Activated T-helper 2 cell treated with anti-CD3 and anti-CD28 coated beads, Interferon-gamma antibody, Interleukin-2, Interleukin-4, amounts not matched to agents 10 μg/mL and 5 μg/mL and 100 μg/mL, durations not matched to agents 14 hours and 24 hours and 36 hours (primary cell): ENCODE measurements at regions of chr18 and their contacts with region 1.

Region 1: GRCh38 chr18:6004683-6005082 is 109.4 kb upstream of the TMEM200C start:
- DNase-seq: peak; percentile 43
- H3K4me3 Mint-ChIP-seq: no peak overlapping the region
- H3K27ac Mint-ChIP-seq: peak overlapping the region; percentile 82
- H3K4me1 Mint-ChIP-seq: peaks cover 38% of the 10 kb centered on the region
- H3K27me3 Mint-ChIP-seq: peaks cover 2% of the 10 kb centered on the region

Region 2: DNA sequence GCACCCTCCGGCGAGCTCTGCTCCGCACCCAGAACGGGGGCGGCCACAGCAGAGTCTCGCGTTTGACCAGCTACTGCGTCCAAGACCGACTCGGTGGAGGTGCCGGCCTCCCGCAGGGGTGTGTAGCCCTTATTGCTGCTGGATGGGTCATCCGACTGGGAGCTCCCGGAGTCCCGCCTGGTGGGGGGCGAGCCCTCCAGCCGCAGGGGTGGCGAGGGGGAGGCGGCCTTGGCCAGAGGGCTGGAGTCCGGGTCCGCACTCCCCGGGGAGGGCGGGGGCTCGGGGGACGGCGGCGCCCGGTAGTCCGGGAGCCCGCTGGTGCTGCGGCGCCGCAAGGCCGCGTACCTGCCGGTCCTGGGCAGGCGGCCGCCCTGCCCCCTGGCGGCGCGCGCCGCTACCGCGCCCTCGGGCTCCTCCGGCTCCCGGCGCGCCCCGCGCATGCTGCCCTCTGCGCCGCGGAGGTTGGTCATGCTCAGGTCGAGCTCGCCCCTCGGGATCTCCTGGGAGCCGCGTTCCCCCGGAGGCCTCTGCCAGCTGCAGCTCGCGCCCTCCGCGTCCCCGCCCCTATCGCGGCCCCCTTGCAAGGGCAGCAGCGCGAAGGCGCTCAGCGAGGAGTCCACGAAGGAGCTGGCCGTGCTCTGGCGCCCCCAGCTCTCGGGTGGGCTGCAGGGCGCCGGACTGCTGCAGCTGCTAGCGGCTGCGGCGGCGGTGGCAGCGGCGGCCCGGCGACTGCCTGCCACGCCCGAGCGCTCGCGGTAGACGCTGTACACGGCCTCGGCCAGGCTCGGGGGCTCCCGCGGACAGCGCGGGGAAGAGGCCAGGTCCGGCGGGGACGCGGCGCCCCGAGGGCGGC is 114.1 kb before region 1 on chr18:
- intact Hi-C with region 1: loop called (anchors 5 kb)
- DNase-seq: no peak
- H3K4me3 Mint-ChIP-seq: no peak overlapping the region
- H3K27ac Mint-ChIP-seq: no peak overlapping the region
- H3K4me1 Mint-ChIP-seq: peaks cover 2% of the 10 kb centered on the region
- H3K27me3 Mint-ChIP-seq: peaks cover 58% of the 10 kb centered on the region

Region 3: DNA sequence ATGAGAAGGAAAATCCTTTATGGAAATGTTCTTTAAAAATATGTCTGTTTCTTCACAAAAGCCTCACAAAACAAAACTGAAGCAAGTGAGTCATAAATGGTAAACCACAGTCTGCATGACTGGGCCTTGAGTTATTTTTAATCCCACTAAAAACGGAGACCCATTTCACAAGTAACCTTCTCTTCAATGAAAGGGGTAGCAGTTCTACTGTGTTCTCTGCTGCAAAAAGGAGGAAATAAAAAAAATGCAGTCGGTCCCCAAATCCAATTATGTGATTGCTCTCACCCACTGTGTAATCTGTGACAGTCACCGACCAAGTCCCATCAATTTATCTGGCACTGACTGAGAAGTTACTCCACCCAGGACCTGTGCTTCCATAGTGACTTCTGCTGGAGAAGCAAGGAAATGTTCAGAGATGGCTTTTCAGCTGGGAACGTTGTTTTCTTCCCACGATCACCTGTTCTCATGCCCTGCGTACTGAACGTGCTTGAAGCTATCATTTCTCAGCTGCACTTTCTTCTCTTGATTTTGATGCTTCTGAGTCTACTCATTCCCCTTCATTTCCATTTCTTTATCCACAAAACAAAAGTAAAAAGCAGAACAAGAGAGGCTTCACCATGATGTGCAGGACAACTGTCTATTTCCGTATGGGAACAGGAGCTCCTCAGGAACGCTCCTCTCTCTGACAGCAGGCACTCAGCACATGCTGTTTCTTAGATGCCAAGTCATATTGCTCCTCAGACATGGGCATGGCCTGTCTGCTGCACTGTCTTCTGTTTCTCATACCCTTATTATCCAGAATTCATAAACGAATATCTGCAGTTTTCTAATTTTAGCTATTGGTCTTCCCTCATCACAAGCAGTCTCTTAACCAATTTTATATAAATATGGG is 29.3 kb before region 1 on chr18:
- intact Hi-C with region 1: loop called (anchors 1 kb)
- DNase-seq: no peak
- H3K4me3 Mint-ChIP-seq: no peak overlapping the region
- H3K27ac Mint-ChIP-seq: no peak overlapping the region
- H3K4me1 Mint-ChIP-seq: peaks cover 17% of the 10 kb centered on the region
- H3K27me3 Mint-ChIP-seq: peaks cover 2% of the 10 kb centered on the region

Region 4: DNA sequence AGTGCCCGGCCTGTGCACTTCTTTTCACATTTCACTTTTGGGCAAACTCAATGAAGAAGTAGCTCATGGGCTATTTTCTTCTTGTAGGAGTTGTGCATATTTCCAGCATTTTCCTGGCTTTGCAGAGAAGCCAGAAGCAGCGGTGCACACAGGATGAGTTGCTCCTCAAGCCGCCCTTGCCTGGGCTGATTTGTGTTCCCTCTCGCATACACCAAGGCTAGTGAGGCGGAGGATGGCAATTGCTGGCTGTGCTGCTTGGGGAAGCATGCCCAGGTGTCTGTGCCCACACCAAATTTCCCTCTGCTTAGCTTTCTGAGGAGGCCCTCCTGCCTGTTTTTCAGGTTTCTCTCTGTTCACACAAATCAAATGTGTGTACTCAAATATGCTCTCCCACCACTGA is 24.0 kb before region 1 on chr18:
- intact Hi-C with region 1: loop called (anchors 1 kb)
- DNase-seq: no peak
- H3K4me3 Mint-ChIP-seq: no peak overlapping the region
- H3K27ac Mint-ChIP-seq: no peak overlapping the region
- H3K4me1 Mint-ChIP-seq: peaks cover 4% of the 10 kb centered on the region
- H3K27me3 Mint-ChIP-seq: peaks cover 5% of the 10 kb centered on the region

Region 5: DNA sequence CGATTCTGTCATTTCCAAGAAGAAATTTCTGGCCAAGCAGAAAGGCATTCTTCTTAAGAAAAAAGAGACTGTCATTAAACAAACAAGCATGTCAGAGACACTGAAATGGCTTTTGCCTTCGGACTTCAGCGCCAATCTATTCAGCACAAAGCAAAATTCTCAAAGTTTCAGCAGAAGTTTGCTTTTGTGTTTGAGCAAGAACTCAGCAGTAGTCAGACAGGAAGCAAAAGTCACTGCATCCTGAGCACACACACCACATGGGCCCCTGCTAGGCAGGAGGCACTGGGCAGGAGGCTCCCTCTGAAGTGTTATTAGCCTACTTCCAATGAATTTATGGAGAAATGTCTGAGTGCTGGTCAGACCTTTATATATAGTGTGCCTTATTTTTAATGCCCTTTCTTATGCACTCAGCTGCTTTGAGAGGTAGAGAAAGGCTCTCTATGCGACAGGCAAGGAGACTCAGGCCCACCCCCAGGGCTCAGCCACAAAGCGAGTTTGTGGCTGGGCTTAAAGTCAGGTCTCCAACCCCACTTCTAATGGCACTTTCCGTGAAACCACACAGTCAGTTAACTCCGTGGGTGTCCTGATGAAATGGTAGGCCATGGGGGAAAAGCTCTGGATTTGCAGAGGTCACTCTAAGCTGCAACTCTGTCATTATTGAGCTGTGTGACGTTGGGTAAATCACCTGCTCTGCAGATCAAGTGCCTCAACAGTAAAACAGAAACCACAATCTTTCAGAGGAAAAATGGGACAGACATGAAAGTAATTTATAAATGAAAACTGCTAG is 51.7 kb after region 1 on chr18:
- intact Hi-C with region 1: loop called (anchors 2 kb)
- DNase-seq: no peak
- H3K4me3 Mint-ChIP-seq: no peak overlapping the region
- H3K27ac Mint-ChIP-seq: no peak overlapping the region
- H3K4me1 Mint-ChIP-seq: peaks cover 10% of the 10 kb centered on the region
- H3K27me3 Mint-ChIP-seq: no peaks in the 10 kb centered on the region